ENCODE measurements at regions of chr9 and their contacts with region 1.

Region 1: GRCh38 chr9:121074635-121075385 is at the start of gene CNTRL:
- H3K4me3 Mint-ChIP-seq: peak within 1 kb of the TSS; percentile 94
- H3K27ac Mint-ChIP-seq: peak within 1 kb of the TSS; percentile 92
- H3K4me1 Mint-ChIP-seq: peaks cover 51% of the 10 kb centered on the region
- H3K27me3 Mint-ChIP-seq: no peaks in the 10 kb centered on the region

Region 2: GRCh38 chr9:121098567-121099198 is 23.9 kb after region 1 on chr9:
- intact Hi-C with region 1: no loop called
- H3K4me3 Mint-ChIP-seq: no peak overlapping the region
- H3K27ac Mint-ChIP-seq: peak overlapping the region; percentile 60
- H3K4me1 Mint-ChIP-seq: peaks cover 14% of the 10 kb centered on the region
- H3K27me3 Mint-ChIP-seq: no peaks in the 10 kb centered on the region

Region 3: GRCh38 chr9:121121582-121122087 is 46.8 kb after region 1 on chr9:
- intact Hi-C with region 1: loop called (anchors 2 kb)
- H3K4me3 Mint-ChIP-seq: peak overlapping the region; percentile 74
- H3K27ac Mint-ChIP-seq: peak overlapping the region; percentile 89
- H3K4me1 Mint-ChIP-seq: peaks cover 11% of the 10 kb centered on the region
- H3K27me3 Mint-ChIP-seq: no peaks in the 10 kb centered on the region

Region 4: GRCh38 chr9:122218935-122219855 is 1144.4 kb after region 1 on chr9:
- intact Hi-C with region 1: no loop called
- H3K4me3 Mint-ChIP-seq: peak overlapping the region; percentile 27
- H3K27ac Mint-ChIP-seq: no peak overlapping the region
- H3K4me1 Mint-ChIP-seq: peaks cover 41% of the 10 kb centered on the region
- H3K27me3 Mint-ChIP-seq: peaks cover 94% of the 10 kb centered on the region

Measured in dendritic cell treated with granulocyte-macrophage colony-stimulating factor and Interleukin-4, amounts not matched to agents 40 ng/mL and 50 ng/mL, for 4 days (primary cell).